ACHN (cell line): ENCODE measurements at regions of chr18 and their contacts with region 1.

Region 1: GRCh38 chr18:37476182-37476581 is 89.4 kb downstream of the CELF4 start:
- DNase-seq: peak; percentile 41

Region 2: DNA sequence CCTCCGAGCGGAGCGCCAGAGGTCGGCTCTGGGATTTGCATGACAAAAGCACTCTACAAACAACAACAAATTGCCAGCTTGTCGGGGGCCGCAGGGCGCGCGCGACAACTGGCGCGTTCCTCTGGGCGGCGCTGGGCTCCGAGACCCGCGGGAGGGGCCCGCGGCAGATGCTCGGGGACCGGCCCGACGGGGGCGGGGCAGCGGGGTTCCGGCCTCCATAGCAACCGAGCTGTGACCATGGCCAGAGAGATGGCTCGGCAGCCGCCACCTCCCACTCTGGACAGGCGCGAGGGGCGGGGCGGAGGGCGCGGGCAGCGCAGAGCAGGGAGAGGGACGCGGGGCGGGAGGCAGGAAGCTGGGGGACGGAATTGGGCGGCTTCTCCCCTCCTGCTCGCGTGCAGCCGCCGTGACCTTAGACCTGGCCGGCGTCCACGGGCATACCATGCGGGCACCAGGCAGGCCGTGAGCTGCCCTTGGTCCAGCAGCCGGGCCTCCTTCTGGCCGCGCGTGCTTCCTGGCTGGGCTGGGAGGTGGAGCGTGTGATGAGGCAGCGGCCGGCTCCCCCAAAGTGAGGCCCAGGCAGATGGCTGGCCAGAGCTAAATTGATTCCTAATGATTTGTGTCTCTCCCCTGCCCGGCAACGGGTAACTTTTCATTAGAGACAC is 82.1 kb before region 1 on chr18:
- in situ Hi-C with region 1: loop called (anchors 25 kb)
- DNase-seq: peak; percentile 90